Mammary epithelial cell (primary cell): ENCODE measurements at regions of chrX and their contacts with region 1.

Region 1: GRCh38 chrX:43530837-43531236 is 125.3 kb upstream of the MAOA start:
- DNase-seq: no peak
- H3K4me3 ChIP-seq: no peak overlapping the region
- H3K27ac ChIP-seq: no peak overlapping the region
- H3K4me1 ChIP-seq: no peaks in the 10 kb centered on the region
- H3K27me3 ChIP-seq: peaks cover 8% of the 10 kb centered on the region
- CTCF ChIP-seq: no peak

Region 2: DNA sequence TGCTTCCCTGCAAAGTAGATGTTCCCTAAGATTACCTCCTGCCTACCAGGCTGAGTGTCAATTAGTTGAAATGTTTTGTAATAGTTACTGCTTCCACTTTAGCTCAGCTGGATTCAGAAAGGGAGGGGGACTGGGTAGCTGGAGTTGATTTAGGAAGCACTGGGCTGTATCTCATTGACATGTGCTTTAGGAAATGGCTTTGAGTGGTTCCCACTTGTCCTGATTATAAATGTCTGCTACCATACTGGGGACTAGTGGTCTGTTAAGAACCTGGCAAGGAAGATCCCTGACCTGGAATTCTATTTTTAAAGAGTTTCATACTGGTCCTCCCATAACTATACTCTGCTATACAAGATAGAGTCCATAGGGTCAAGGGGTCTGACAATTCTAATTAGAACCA is 389.0 kb before region 1 on chrX:
- CTCF ChIA-PET with region 1: no interaction called
- dilution Hi-C with region 1: no loop called
- in situ Hi-C with region 1: no loop called
- intact Hi-C with region 1: no loop called
- DNase-seq: no peak
- H3K4me3 ChIP-seq: no peak overlapping the region
- H3K27ac ChIP-seq: no peak overlapping the region
- H3K4me1 ChIP-seq: no peaks in the 10 kb centered on the region
- H3K27me3 ChIP-seq: peaks cover 2% of the 10 kb centered on the region
- CTCF ChIP-seq: no peak

Region 3: GRCh38 chrX:43486281-43486680 is 44.6 kb before region 1 on chrX:
- CTCF ChIA-PET with region 1: no interaction called
- dilution Hi-C with region 1: loop called (anchors 5 kb)
- in situ Hi-C with region 1: no loop called
- intact Hi-C with region 1: no loop called
- DNase-seq: no peak
- H3K4me3 ChIP-seq: no peak overlapping the region
- H3K27ac ChIP-seq: no peak overlapping the region
- H3K4me1 ChIP-seq: no peaks in the 10 kb centered on the region
- H3K27me3 ChIP-seq: peaks cover 8% of the 10 kb centered on the region
- CTCF ChIP-seq: no peak